Activated CD4-positive, alpha-beta T cell treated with anti-CD3 and anti-CD28 coated beads, Interleukin-2, amount 10 ng/mL, durations not matched to agents 24 days and 14 days (primary cell): ENCODE measurements at regions of chr1 and their contacts with region 1.

Region 1: DNA sequence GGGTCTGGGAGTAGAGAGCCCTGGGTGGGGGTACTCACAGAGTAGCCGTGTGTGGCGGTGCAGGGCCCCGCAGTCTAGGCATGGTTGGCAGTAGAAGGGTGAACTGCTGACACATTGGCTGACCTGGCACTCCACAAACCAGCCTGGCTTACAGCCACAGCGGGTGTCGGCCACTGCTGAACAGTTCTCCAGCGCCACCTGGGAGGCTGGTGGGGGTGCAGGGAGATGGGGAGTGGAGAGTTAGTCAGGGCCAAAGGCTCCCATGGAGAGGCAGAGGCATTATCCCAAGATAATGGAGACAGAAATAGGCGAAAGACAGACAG is 1.5 kb downstream of the TNFRSF25 start:
- DNase-seq: peak; percentile 79
- H3K4me3 Mint-ChIP-seq: peak overlapping the region; percentile 98
- H3K27ac Mint-ChIP-seq: peak overlapping the region; percentile 85
- H3K4me1 Mint-ChIP-seq: peaks cover 41% of the 10 kb centered on the region
- H3K27me3 Mint-ChIP-seq: no peaks in the 10 kb centered on the region

Region 2: DNA sequence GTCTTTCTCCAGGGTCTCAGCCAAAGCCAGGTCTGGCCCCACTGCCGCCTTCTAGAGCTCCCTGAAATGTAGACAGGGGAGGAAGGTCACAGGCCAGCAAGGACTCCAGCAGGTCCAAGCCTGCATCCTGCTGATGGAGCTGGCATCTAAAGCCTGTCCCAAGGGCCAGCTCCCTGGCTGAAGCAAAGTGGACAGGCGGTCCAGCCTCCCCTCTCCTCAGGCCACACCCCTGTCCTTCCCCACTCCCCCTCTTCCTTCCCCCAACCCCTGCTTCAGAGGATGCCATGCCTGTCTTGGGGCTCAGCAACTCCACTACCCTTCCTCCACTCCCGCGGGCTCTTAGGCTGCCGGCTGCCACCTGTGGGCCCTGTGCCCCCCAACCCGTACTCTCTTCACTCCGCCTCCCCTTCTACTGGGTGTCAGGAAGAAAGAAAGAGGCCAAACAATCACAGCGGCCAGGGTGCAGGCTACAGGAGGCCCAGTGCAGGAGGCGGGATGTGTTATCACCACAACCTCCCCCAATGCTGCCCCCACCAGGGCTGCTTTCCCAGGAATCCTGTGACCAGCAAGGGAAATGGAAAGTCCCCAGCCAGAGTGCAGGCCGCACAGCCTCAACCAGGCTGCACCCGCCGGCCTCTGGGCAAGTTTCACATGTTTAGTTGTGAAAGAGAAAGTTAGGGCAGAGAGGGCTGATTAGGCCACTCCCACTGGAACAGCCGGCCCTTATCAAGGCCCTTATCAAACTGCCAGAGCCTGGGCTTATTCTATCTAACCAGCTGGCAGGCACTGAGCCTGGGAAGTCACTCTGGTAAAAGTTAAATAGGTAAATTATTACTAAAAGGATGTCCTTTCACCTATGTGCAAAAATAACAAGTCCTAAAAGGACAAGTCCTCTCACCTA is 105.0 kb before region 1 on chr1:
- intact Hi-C with region 1: no loop called
- DNase-seq: peak; percentile 93
- H3K4me3 Mint-ChIP-seq: peak overlapping the region; percentile 80
- H3K27ac Mint-ChIP-seq: peak overlapping the region; percentile 94
- H3K4me1 Mint-ChIP-seq: peaks cover 39% of the 10 kb centered on the region
- H3K27me3 Mint-ChIP-seq: no peaks in the 10 kb centered on the region

Region 3: GRCh38 chr1:6423321-6423999 is 41.0 kb before region 1 on chr1:
- intact Hi-C with region 1: loop called (anchors 5 kb)
- DNase-seq: peak; percentile 92
- H3K4me3 Mint-ChIP-seq: peak overlapping the region; percentile 63
- H3K27ac Mint-ChIP-seq: no peak overlapping the region
- H3K4me1 Mint-ChIP-seq: peaks cover 12% of the 10 kb centered on the region
- H3K27me3 Mint-ChIP-seq: peaks cover 50% of the 10 kb centered on the region

Region 4: GRCh38 chr1:6475381-6476133 is 11.1 kb after region 1 on chr1:
- intact Hi-C with region 1: loop called (anchors 1 kb)
- DNase-seq: peak; percentile 95
- H3K4me3 Mint-ChIP-seq: no peak overlapping the region
- H3K27ac Mint-ChIP-seq: no peak overlapping the region
- H3K4me1 Mint-ChIP-seq: peaks cover 6% of the 10 kb centered on the region
- H3K27me3 Mint-ChIP-seq: peaks cover 2% of the 10 kb centered on the region